ENCODE measurements at regions of chr15 and their contacts with region 1.

Region 1: DNA sequence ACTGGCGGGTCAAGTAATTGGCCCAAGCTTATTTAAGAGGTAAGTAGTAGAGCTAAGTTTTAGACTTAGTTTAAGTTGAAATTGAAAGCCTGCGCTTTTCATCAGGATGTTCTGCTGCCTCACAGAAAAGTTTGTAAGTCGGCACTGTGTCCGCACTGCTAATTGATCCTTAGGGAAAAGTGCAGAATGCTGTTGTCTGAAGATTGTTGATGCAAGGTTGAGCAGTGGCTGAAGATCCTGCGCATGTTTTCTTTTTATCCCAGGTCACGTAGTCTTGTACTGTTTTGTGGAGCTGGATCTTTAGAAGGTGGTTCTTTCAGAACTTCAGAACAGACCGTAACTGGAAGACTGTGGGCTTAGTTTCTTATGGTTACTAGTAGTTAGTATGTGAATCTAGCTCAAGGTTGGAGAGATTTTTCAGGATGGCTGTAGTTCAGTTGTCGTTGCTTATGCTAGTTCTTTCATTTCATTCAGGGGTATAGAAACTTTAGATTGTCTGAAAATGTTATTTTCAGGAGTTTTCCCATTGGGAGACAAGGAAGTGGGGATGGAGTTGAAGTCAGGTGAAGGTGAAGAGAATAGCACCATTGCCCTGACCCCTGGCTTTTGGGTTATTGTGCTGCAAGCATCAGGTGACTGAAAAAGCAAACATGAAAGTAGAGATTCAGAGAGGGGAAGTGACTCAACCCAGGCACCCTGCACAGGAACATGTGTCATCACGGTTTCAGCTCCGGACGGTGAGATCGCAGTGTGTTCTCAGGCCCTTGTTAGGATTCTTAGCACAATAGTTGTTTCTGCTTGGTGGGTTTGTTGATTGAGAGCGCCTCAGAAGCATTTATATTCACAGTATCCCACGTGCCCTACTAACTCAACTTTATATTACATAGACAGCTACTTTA is 32.8 kb downstream of the AKAP13 start:
- DNase-seq: peak; percentile 88
- H3K4me3 Mint-ChIP-seq: peak overlapping the region; percentile 50
- H3K27ac Mint-ChIP-seq: peak overlapping the region; percentile 76
- H3K4me1 Mint-ChIP-seq: peaks cover 78% of the 10 kb centered on the region
- H3K27me3 Mint-ChIP-seq: no peaks in the 10 kb centered on the region

Region 2: DNA sequence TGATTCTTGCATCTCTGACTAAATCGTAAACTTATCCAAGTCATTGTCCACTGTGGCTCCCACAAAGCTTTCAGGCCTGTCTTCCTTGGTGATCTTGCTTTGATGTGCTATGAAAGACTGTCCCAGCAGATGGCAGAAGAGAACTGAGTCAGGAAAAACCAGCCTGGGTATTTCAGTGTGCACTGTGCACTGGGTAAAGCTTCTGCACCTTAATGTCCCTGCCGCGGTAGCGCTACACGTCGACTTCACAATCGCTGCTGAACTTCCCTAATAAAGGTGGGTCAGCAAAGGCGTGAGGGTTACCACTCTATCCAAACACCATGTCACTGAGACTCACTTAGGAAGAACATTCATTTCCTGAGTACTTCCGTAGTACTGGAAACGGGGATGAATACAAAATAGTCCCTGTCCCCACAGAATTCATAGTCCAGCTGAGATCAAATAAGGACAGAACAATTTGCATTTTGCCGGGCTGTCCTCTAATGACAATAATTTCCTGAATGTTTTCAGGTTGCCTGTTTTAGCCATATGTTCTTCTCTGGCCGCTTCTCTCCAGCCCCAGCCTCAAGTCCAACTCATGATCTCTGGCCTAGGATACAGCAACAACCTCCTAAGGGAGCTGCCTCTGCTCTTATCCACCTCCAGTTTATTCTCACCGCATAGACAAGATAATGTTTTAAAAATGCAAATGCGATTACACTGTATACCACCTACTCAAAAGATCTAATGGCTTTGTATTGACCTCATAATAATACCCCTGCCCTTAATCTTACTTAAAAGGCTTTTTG is 116.4 kb before region 1 on chr15:
- CTCF ChIA-PET with region 1: interaction called, 49 read pairs
- POLR2A ChIA-PET with region 1: interaction called, 4 read pairs
- intact Hi-C with region 1: loop called (anchors 1 kb)
- DNase-seq: peak; percentile 77
- H3K4me3 Mint-ChIP-seq: peak overlapping the region; percentile 52
- H3K27ac Mint-ChIP-seq: no peak overlapping the region
- H3K4me1 Mint-ChIP-seq: peaks cover 12% of the 10 kb centered on the region
- H3K27me3 Mint-ChIP-seq: no peaks in the 10 kb centered on the region

Region 3: GRCh38 chr15:85330901-85331588 is 82.2 kb before region 1 on chr15:
- CTCF ChIA-PET with region 1: interaction called, 65 read pairs
- POLR2A ChIA-PET with region 1: interaction called, 8 read pairs
- intact Hi-C with region 1: loop called (anchors 1 kb)
- DNase-seq: peak; percentile 90
- H3K4me3 Mint-ChIP-seq: peak overlapping the region; percentile 82
- H3K27ac Mint-ChIP-seq: peak overlapping the region; percentile 77
- H3K4me1 Mint-ChIP-seq: peaks cover 38% of the 10 kb centered on the region
- H3K27me3 Mint-ChIP-seq: no peaks in the 10 kb centered on the region

Region 4: GRCh38 chr15:85380217-85380811 is 32.9 kb before region 1 on chr15 and contains the start of gene AKAP13:
- CTCF ChIA-PET with region 1: interaction called, 23 read pairs
- POLR2A ChIA-PET with region 1: interaction called, 19 read pairs
- intact Hi-C with region 1: loop called (anchors 1 kb)
- DNase-seq: peak; percentile 98
- H3K4me3 Mint-ChIP-seq: peak within 1 kb of the TSS; percentile 85
- H3K27ac Mint-ChIP-seq: peak within 1 kb of the TSS; percentile 90
- H3K4me1 Mint-ChIP-seq: peaks cover 53% of the 10 kb centered on the region
- H3K27me3 Mint-ChIP-seq: no peaks in the 10 kb centered on the region
- total RNA-seq, gene AKAP13: 106 to 113 TPM

Region 5: DNA sequence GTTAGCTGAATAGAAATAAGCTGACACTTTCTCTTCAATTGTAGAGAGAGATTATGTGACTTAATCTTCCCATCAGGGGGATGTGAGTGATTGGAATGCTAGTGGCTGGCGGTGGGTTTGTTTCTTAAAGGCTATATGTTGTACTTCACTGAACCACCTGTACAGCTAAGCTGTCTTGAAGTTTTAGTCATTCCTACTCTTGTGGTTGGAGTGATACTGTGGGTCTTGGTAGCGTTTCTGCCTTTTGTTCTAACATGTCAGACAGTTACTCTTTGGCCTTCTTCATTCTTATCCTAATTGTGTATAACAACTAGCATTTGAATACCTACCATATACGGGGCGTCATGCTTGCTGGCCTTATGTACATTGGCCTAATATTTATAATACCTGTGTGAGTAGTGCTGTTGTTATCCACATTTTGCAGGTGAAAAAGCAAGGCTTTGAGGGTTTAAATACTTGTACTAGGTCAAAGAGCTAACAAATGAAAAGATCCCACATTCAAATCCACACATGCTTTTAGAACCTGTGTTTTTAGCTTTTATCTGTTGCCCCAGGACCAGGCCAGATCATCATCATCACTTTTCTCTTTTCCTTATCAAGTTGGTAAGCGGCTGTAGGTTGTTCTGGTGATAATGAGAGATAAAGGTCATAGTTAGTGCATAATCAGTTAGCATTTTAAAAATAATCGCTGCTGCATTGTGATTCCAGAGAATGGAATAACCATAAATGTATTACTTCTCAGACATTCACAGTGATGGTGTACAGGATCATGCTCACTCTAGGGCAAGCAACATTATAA is 17.4 kb after region 1 on chr15:
- CTCF ChIA-PET with region 1: interaction called, 5 read pairs
- POLR2A ChIA-PET with region 1: interaction called, 3 read pairs
- intact Hi-C with region 1: loop called (anchors 2 kb)
- DNase-seq: peak; percentile 61
- H3K4me3 Mint-ChIP-seq: no peak overlapping the region
- H3K27ac Mint-ChIP-seq: peak overlapping the region; percentile 18
- H3K4me1 Mint-ChIP-seq: peaks cover 57% of the 10 kb centered on the region
- H3K27me3 Mint-ChIP-seq: no peaks in the 10 kb centered on the region

Region 6: DNA sequence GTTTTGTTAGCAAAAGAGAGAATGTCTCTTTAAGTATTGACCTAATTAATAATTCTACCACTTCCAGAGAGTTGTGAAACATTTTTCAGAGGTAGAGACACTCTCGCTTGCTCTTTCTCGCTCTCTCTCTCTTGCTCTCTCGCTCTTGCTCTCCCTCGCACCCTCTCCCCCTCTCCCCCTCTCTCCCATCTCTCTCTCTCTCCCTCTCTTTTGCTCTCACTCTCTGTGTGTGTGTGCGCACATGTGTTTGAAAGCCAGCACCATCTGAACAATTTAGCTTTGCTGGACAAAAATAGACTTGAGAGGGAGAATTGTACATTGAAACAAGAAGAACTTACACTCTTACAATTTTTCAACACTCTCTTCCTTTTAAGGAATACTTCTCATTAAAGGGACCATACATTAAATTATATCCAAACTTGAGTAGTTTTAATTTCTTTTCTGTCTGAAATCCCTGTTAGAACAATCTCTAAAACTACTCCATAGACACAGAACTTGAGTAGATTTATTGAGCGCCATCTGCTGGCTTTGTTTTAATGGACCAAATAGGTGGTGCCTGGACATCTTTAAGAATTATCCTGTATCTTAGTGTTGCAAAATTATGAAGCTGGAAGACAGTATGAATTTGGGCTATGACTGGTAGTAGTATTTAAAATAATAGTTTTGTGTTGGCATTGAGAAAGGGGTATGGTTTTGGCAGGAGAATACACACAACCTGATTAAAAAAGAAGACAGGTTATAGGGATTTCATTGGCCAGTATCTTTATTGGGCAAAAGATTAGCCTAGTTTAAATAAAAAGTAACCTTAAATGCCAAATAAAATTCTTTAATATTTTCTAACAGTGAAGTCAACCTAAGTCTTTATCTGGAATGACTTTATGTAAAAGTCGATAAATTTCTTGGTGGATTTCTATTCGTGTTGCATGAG is 91.8 kb after region 1 on chr15:
- CTCF ChIA-PET with region 1: interaction called, 10 read pairs
- POLR2A ChIA-PET with region 1: no interaction called
- intact Hi-C with region 1: no loop called
- DNase-seq: peak; percentile 38
- H3K4me3 Mint-ChIP-seq: no peak overlapping the region
- H3K27ac Mint-ChIP-seq: no peak overlapping the region
- H3K4me1 Mint-ChIP-seq: peaks cover 68% of the 10 kb centered on the region
- H3K27me3 Mint-ChIP-seq: no peaks in the 10 kb centered on the region

Region 7: GRCh38 chr15:86650093-86650492 is 1236.9 kb after region 1 on chr15:
- CTCF ChIA-PET with region 1: no interaction called
- POLR2A ChIA-PET with region 1: no interaction called
- intact Hi-C with region 1: loop called (anchors 5 kb)
- DNase-seq: peak; percentile 20
- H3K4me3 Mint-ChIP-seq: no peak overlapping the region
- H3K27ac Mint-ChIP-seq: peak overlapping the region; percentile 87
- H3K4me1 Mint-ChIP-seq: peaks cover 56% of the 10 kb centered on the region
- H3K27me3 Mint-ChIP-seq: no peaks in the 10 kb centered on the region